CD4-positive, alpha-beta T cell (primary cell): ENCODE measurements at regions of chr14 and their contacts with region 1.

Region 1: GRCh38 chr14:73753959-73754882 is 40.0 kb upstream of the PNMA1 start:
- DNase-seq: peak in 5 of 14 experiments; percentile 34 to 77 (median 45)
- ATAC-seq: peak; percentile 14
- H3K4me3 ChIP-seq: peak overlapping the region; percentile 57
- H3K4me3 Mint-ChIP-seq: peak overlapping the region; percentile 88
- H3K27ac ChIP-seq: peak overlapping the region; percentile 85 to 88
- H3K27ac Mint-ChIP-seq: peak overlapping the region; percentile 99
- H3K4me1 ChIP-seq: peaks cover 95% of the 10 kb centered on the region
- H3K4me1 Mint-ChIP-seq: peaks cover 95% of the 10 kb centered on the region
- H3K27me3 ChIP-seq: no peaks in the 10 kb centered on the region
- H3K27me3 Mint-ChIP-seq: no peaks in the 10 kb centered on the region
- CTCF ChIP-seq: no peak

Region 2: GRCh38 chr14:73700325-73700724 is 53.9 kb before region 1 on chr14:
- CTCF ChIA-PET with region 1: no interaction called
- POLR2A ChIA-PET with region 1: no interaction called
- intact Hi-C with region 1: no loop called
- DNase-seq: no peak
- ATAC-seq: no peak
- H3K4me3 ChIP-seq: no peak overlapping the region
- H3K4me3 Mint-ChIP-seq: no peak overlapping the region
- H3K27ac ChIP-seq: no peak overlapping the region
- H3K27ac Mint-ChIP-seq: no peak overlapping the region
- H3K4me1 ChIP-seq: no peaks in the 10 kb centered on the region
- H3K4me1 Mint-ChIP-seq: no peaks in the 10 kb centered on the region
- H3K27me3 ChIP-seq: no peaks in the 10 kb centered on the region
- H3K27me3 Mint-ChIP-seq: no peaks in the 10 kb centered on the region
- CTCF ChIP-seq: no peak

Region 3: GRCh38 chr14:73713803-73714655 is 40.2 kb before region 1 on chr14 and contains the start of gene PNMA1:
- CTCF ChIA-PET with region 1: interaction called, 4 read pairs
- POLR2A ChIA-PET with region 1: interaction called, 41 read pairs
- intact Hi-C with region 1: loop called in 1 of 2 experiments (anchors 2 kb)
- DNase-seq: peak; percentile 75 to 95 (median 82)
- ATAC-seq: peak; percentile 68
- H3K4me3 ChIP-seq: peak within 1 kb of the TSS; percentile 87
- H3K4me3 Mint-ChIP-seq: peak within 1 kb of the TSS; percentile 96
- H3K27ac ChIP-seq: peak within 1 kb of the TSS; percentile 73 to 77
- H3K27ac Mint-ChIP-seq: peak within 1 kb of the TSS; percentile 92
- H3K4me1 ChIP-seq: peaks cover 33% of the 10 kb centered on the region
- H3K4me1 Mint-ChIP-seq: peaks cover 33% of the 10 kb centered on the region
- H3K27me3 ChIP-seq: no peaks in the 10 kb centered on the region
- H3K27me3 Mint-ChIP-seq: no peaks in the 10 kb centered on the region
- CTCF ChIP-seq: no peak
- total RNA-seq, gene PNMA1: 52.6 to 55.9 TPM

Region 4: GRCh38 chr14:73771848-73772638 is 17.8 kb after region 1 on chr14:
- CTCF ChIA-PET with region 1: interaction called, 60 read pairs
- POLR2A ChIA-PET with region 1: interaction called, 138 read pairs
- intact Hi-C with region 1: no loop called
- DNase-seq: peak in 12 of 14 experiments; percentile 39 to 84 (median 59)
- ATAC-seq: peak; percentile 83
- H3K4me3 ChIP-seq: no peak overlapping the region
- H3K4me3 Mint-ChIP-seq: peak overlapping the region; percentile 81
- H3K27ac ChIP-seq: peak overlapping the region; percentile 48 to 60
- H3K27ac Mint-ChIP-seq: peak overlapping the region; percentile 88
- H3K4me1 ChIP-seq: peaks cover 74% of the 10 kb centered on the region
- H3K4me1 Mint-ChIP-seq: peaks cover 75% of the 10 kb centered on the region
- H3K27me3 ChIP-seq: no peaks in the 10 kb centered on the region
- H3K27me3 Mint-ChIP-seq: no peaks in the 10 kb centered on the region
- CTCF ChIP-seq: no peak

Region 5: GRCh38 chr14:73785873-73786695 is 31.9 kb after region 1 on chr14:
- CTCF ChIA-PET with region 1: interaction called, 40 read pairs
- POLR2A ChIA-PET with region 1: interaction called, 430 read pairs
- intact Hi-C with region 1: loop called in 1 of 2 experiments (anchors 5 kb)
- DNase-seq: peak; percentile 51 to 84 (median 58)
- ATAC-seq: peak; percentile 70
- H3K4me3 ChIP-seq: peak overlapping the region; percentile 79
- H3K4me3 Mint-ChIP-seq: peak overlapping the region; percentile 96
- H3K27ac ChIP-seq: peak overlapping the region; percentile 67 to 76
- H3K27ac Mint-ChIP-seq: peak overlapping the region; percentile 96
- H3K4me1 ChIP-seq: peaks cover 67% of the 10 kb centered on the region
- H3K4me1 Mint-ChIP-seq: peaks cover 62% of the 10 kb centered on the region
- H3K27me3 ChIP-seq: no peaks in the 10 kb centered on the region
- H3K27me3 Mint-ChIP-seq: no peaks in the 10 kb centered on the region
- CTCF ChIP-seq: no peak

Region 6: GRCh38 chr14:73825551-73826188 is 71.4 kb after region 1 on chr14:
- CTCF ChIA-PET with region 1: interaction called, 8 read pairs
- POLR2A ChIA-PET with region 1: interaction called, 17 read pairs
- intact Hi-C with region 1: loop called (anchors 2 kb)
- DNase-seq: peak; percentile 62 to 88 (median 76)
- ATAC-seq: peak; percentile 99
- H3K4me3 ChIP-seq: no peak overlapping the region
- H3K4me3 Mint-ChIP-seq: no peak overlapping the region
- H3K27ac ChIP-seq: no peak overlapping the region
- H3K27ac Mint-ChIP-seq: no peak overlapping the region
- H3K4me1 ChIP-seq: peaks cover 10% of the 10 kb centered on the region
- H3K4me1 Mint-ChIP-seq: no peaks in the 10 kb centered on the region
- H3K27me3 ChIP-seq: no peaks in the 10 kb centered on the region
- H3K27me3 Mint-ChIP-seq: no peaks in the 10 kb centered on the region
- CTCF ChIP-seq: peak; percentile 95